ENCODE measurements at regions of chr5 and their contacts with region 1.

Region 1: GRCh38 chr5:128815201-128815600 is 150.1 kb upstream of the SLC27A6 start:
- DNase-seq: peak; percentile 8
- H3K4me3 Mint-ChIP-seq: no peak overlapping the region
- H3K27ac Mint-ChIP-seq: no peak overlapping the region
- H3K4me1 Mint-ChIP-seq: no peaks in the 10 kb centered on the region
- H3K27me3 Mint-ChIP-seq: no peaks in the 10 kb centered on the region
- CTCF ChIP-seq: no peak

Region 2: DNA sequence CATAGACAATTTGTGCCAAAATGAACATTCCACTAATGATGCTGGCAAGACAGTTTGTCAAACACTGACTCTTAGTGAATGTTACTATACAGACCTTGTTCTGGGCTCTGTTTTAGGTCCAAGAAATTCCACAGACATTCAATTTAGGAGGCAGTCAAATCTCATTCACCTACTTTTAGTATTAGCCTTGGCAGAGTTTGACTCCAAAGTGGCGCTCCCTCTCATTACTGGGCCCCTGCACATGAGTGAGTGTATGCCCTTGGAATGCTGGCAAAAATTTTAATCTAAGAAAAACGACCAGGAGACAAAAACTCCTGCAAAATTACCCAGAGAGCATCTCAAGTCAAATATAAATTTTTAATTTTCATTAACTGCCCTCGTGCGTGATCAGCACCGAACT is 55.2 kb after region 1 on chr5:
- CTCF ChIA-PET with region 1: no interaction called
- POLR2A ChIA-PET with region 1: no interaction called
- intact Hi-C with region 1: loop called (anchors 10 kb)
- DNase-seq: no peak
- H3K4me3 Mint-ChIP-seq: no peak overlapping the region
- H3K27ac Mint-ChIP-seq: no peak overlapping the region
- H3K4me1 Mint-ChIP-seq: no peaks in the 10 kb centered on the region
- H3K27me3 Mint-ChIP-seq: peaks cover 60% of the 10 kb centered on the region
- CTCF ChIP-seq: no peak

Measured in MCF 10A (cell line).